ENCODE measurements at regions of chr6 and their contacts with region 1.

Region 1: DNA sequence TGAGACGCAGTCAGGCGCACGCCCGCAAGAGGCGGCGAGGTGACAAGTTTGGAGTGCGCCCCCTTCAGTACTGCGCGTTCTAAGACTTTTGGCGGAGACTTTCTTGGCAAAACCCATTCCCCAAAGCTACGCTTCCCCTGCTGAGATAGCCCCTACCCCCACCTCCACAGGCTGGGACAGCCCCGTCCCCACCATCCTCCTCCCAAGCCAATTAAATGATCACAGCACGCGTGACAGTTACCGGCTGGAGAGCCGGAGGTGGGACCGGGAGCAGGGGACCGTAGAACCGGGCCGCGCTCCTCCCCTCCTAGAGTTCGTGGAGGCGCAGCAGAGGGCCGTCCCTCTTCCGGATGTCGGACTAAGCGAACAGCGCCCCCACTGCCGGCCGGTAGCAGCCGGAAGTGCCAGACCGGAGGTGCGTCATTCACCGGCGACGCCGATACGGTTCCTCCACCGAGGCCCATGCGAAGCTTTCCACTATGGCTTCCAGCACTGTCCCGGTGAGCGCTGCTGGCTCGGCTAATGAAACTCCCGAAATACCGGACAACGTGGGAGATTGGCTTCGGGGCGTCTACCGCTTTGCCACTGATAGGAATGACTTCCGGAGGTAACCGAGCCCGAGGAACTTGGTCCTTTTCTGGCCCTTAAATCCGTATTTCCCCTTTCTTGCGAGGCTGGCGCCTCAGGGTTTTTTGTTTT is at the start of gene TOMM6:
- DNase-seq: peak; percentile 73 to 97
- H3K4me3 ChIP-seq: peak within 1 kb of the TSS; percentile 75 to 79
- H3K27ac ChIP-seq: peak within 1 kb of the TSS; percentile 87 to 92
- H3K4me1 ChIP-seq: peaks cover 12 to 13% of the 10 kb centered on the region in 2 donors
- H3K27me3 ChIP-seq: no peaks in the 10 kb centered on the region
- CTCF ChIP-seq: peak; percentile 86 to 91 (median 86)
- total RNA-seq, gene TOMM6: 79.9 TPM

Region 2: DNA sequence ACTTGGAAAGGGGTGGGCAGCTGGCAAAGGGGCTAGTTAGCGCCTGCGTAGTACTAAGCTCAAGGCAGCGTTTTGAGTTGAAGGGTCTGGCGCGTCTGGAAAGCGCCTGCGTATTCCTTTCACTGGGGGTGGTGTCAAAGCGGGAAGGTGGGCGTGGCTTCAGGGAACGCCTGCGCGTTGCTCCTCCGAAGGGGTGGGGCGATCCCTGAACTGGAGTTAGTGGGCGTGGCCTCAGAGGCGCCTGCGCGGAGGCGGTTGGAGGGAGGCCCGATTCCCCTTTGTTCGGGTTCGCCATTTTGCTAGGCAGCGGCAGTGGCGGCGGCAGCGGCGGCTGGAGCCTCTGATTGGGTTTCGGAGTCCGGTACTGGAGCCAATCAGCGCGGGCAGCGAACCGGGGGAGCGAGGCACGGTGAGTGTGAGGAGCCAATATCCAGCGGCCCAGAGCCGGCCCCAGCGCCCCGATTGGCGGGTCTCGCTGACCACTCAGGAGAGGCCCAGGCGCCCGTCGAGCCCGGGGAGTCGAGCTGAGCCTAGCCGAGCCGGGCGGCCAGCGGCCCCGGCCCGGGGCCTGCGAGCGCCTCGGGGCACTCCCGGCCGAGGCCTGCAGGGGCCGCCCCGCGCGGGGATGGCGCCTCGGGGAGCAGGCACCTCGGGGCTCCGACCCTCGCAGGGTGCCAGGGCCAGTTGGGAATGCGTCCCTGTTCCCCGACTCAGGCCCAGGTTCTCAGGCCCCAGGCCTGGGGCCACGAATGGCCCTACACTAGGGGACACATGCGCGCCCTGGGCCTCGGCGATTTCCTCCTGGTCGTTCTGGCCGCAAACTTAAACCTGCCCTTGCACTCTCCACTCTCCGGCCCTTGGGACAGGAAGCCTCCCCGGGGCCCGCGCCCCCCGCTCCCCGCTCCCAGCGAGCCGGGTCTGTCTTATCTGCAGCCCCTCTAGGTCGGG is 714.4 kb before region 1 on chr6 and contains the start of gene NFYA:
- intact Hi-C with region 1: loop called (anchors 2 kb)
- DNase-seq: peak; percentile 98 to 100
- H3K4me3 ChIP-seq: peak within 1 kb of the TSS; percentile 80 to 86
- H3K27ac ChIP-seq: peak within 1 kb of the TSS; percentile 98 to 100
- H3K4me1 ChIP-seq: peaks cover 10 to 27% of the 10 kb centered on the region in 2 donors
- H3K27me3 ChIP-seq: no peaks in the 10 kb centered on the region
- CTCF ChIP-seq: peak; percentile 19 to 62 (median 25)
- total RNA-seq, gene NFYA: 10.4 TPM

Region 3: GRCh38 chr6:41545703-41546474 is 241.5 kb before region 1 on chr6 and contains the start of gene FOXP4:
- intact Hi-C with region 1: loop called (anchors 2 kb)
- DNase-seq: peak; percentile 49 to 93
- H3K4me3 ChIP-seq: peak within 1 kb of the TSS; percentile 75 to 95
- H3K27ac ChIP-seq: peak within 1 kb of the TSS; percentile 50 to 92
- H3K4me1 ChIP-seq: peaks cover 11 to 16% of the 10 kb centered on the region in 2 donors
- H3K27me3 ChIP-seq: no peaks in the 10 kb centered on the region
- CTCF ChIP-seq: no peak
- total RNA-seq, gene FOXP4: 19.5 TPM

Region 4: DNA sequence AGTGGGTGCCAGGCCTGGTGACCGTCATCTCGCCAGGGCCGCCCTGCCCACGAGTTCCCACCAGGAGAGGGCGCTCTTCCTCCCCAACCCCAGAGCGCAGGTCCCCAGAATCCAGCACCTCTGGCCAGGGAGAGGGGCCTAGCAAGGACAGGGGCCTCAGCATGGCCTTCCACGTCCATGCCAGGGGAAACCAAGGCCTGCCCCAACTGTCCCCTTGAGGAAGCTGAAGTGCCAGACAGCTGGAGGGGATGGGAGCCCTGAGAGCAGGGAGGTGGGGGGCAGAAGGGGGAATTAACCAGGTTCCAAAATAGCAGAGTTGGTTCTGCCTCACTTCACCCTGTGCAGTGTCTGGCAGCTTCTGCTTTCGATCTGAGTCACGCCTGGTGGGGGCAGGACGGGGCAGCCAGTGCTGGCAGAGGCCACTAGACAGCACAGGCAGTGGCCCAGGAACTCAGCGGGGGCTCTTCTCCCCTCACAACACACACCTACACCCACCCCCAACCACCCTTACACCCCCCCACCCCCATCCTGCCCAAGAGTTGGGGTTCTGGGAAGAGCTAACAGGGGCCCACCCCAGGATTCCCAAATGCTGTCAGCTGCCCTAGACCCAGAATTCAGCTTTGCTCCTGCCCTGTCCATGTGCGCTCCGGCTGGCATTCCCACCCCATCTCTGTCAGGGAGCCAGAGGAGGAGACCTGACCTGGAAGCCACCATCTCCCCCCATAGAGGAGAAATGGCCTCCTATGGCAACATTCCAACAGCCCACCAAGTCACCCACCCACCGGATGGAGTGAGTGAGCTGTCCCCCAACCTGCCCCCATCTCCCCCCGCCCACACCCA is 81.2 kb before region 1 on chr6:
- intact Hi-C with region 1: loop called (anchors 5 kb)
- DNase-seq: peak; percentile 74 to 92
- H3K4me3 ChIP-seq: peak overlapping the region in 1 of 2 donors; percentile 7
- H3K27ac ChIP-seq: peak overlapping the region; percentile 86 to 90
- H3K4me1 ChIP-seq: peaks cover 7 to 29% of the 10 kb centered on the region in 2 donors
- H3K27me3 ChIP-seq: no peaks in the 10 kb centered on the region
- CTCF ChIP-seq: peak; percentile 77 to 83 (median 78)

Region 5: GRCh38 chr6:41920921-41921711 is 133.7 kb after region 1 on chr6 and contains the starts of genes BYSL and MED20:
- intact Hi-C with region 1: loop called (anchors 1 kb)
- DNase-seq: peak; percentile 69 to 95
- H3K4me3 ChIP-seq: peak within 1 kb of the TSS; percentile 92 to 97
- H3K27ac ChIP-seq: peak within 1 kb of the TSS; percentile 98 to 99
- H3K4me1 ChIP-seq: peaks cover 8 to 19% of the 10 kb centered on the region in 2 donors
- H3K27me3 ChIP-seq: no peaks in the 10 kb centered on the region
- CTCF ChIP-seq: peak; percentile 94 to 97 (median 96)
- total RNA-seq, gene BYSL: 1.6 TPM
- total RNA-seq, gene MED20: 13.5 TPM

Region 6: GRCh38 chr6:42050266-42051032 is 263.1 kb after region 1 on chr6 and contains the start of gene TAF8:
- intact Hi-C with region 1: loop called (anchors 1 kb)
- DNase-seq: peak; percentile 66 to 94
- H3K4me3 ChIP-seq: peak within 1 kb of the TSS; percentile 71 to 88
- H3K27ac ChIP-seq: peak within 1 kb of the TSS; percentile 83 to 95
- H3K4me1 ChIP-seq: peaks cover 15 to 26% of the 10 kb centered on the region in 2 donors
- H3K27me3 ChIP-seq: no peaks in the 10 kb centered on the region
- CTCF ChIP-seq: no peak
- total RNA-seq, gene TAF8: 26.0 TPM

Region 7: DNA sequence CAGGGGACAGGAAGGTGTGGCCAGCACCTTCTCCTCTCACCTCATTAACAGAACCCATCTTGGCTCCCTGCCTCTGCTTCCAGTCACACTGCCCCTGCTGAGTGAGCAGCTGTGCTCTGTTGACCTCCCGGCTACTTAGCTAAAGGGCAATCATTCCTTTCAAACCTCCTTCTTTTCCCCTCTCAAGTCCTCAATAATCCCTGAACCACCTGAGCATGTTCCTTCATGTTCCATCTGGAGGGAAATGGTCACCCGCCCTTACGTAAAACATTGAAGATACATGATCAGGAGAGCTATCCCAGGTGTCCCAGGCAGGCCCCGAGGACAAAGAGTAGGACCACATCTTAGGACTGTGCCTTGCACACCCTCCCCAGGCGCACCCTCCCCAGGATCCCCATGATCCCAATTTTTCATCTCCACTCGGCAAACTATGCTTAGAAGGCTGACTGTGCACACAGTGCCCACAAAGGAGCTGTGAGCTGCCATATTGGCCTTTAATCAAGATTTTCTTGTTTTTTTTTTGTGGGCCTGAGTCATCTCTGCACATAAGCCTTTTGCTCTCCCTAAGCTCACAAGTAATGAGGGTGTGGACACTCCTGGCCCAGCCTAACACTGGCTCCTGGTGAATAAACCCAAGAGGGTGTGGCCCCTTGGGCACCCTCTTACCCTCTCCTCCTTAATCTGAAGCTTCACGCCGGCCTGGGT is 452.1 kb after region 1 on chr6:
- intact Hi-C with region 1: no loop called
- DNase-seq: no peak
- H3K4me3 ChIP-seq: no peak overlapping the region
- H3K27ac ChIP-seq: no peak overlapping the region
- H3K4me1 ChIP-seq: no peaks in the 10 kb centered on the region
- H3K27me3 ChIP-seq: no peaks in the 10 kb centered on the region
- CTCF ChIP-seq: no peak

Region 8: DNA sequence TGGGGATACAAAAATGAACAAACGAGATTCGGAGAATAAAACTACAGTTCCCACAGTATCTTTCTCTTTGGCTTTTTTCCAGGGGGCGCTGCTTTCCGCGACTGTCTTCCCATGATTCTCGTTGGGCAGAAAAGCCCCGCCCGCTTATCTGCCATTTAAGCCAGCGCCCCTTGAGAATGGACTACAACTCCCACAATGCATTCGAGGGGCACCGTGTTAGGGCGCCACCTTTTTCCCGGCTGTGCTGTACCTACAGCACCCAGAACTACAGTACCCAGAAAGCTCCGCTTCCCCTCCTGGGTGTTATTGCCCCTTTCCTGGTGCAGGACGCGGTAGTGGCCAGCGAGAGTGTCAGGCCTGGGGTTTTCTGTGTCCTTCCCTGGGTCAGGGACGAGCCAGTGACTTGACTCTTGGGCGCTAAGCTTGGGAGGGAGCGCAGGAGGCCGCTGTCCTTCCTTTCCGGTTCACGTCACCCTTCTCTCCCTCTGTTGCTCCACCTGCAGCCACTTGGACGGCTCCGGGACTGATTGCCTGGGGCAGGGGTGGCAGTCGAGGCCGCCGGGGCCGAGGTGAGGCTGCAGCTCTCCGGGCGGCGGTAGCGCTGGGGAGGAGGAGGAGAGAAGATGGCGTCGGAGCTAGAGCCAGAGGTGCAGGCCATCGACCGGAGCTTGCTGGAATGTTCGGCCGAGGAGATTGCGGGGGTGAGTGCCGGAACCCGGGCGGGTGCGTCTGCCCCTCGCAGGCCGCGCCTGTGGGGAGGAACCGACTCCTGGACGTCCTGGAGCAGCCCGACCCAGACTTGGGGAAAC is 776.5 kb after region 1 on chr6 and contains the start of gene UBR2:
- intact Hi-C with region 1: loop called (anchors 10 kb)
- DNase-seq: peak; percentile 94 to 99
- H3K4me3 ChIP-seq: peak within 1 kb of the TSS; percentile 74 to 80
- H3K27ac ChIP-seq: peak within 1 kb of the TSS; percentile 95 to 96
- H3K4me1 ChIP-seq: peaks cover 0 to 4% of the 10 kb centered on the region in 2 donors
- H3K27me3 ChIP-seq: no peaks in the 10 kb centered on the region
- CTCF ChIP-seq: no peak
- total RNA-seq, gene UBR2: 17.8 TPM